PC-9 (cell line): ENCODE measurements at regions of chr7 and their contacts with region 1.

Region 1: GRCh38 chr7:125828153-125828700 is 898.6 kb upstream of the POT1 start:
- DNase-seq: no peak
- H3K4me3 ChIP-seq: no peak overlapping the region
- H3K27ac ChIP-seq: no peak overlapping the region
- H3K4me1 ChIP-seq: no peaks in the 10 kb centered on the region
- H3K27me3 ChIP-seq: no peaks in the 10 kb centered on the region
- CTCF ChIP-seq: no peak

Region 2: GRCh38 chr7:125246706-125247105 is 581.5 kb before region 1 on chr7:
- CTCF ChIA-PET with region 1: no interaction called
- POLR2A ChIA-PET with region 1: interaction called, 25 read pairs
- intact Hi-C with region 1: no loop called
- DNase-seq: no peak
- H3K4me3 ChIP-seq: no peak overlapping the region
- H3K27ac ChIP-seq: no peak overlapping the region
- H3K4me1 ChIP-seq: no peaks in the 10 kb centered on the region
- H3K27me3 ChIP-seq: no peaks in the 10 kb centered on the region
- CTCF ChIP-seq: no peak

Region 3: GRCh38 chr7:126079581-126079980 is 251.4 kb after region 1 on chr7:
- CTCF ChIA-PET with region 1: no interaction called
- POLR2A ChIA-PET with region 1: interaction called, 15 read pairs
- intact Hi-C with region 1: no loop called
- DNase-seq: no peak
- H3K4me3 ChIP-seq: no peak overlapping the region
- H3K27ac ChIP-seq: no peak overlapping the region
- H3K4me1 ChIP-seq: no peaks in the 10 kb centered on the region
- H3K27me3 ChIP-seq: no peaks in the 10 kb centered on the region
- CTCF ChIP-seq: no peak

Region 4: GRCh38 chr7:126411032-126411820 is 583.0 kb after region 1 on chr7:
- CTCF ChIA-PET with region 1: no interaction called
- POLR2A ChIA-PET with region 1: no interaction called
- intact Hi-C with region 1: no loop called
- DNase-seq: no peak
- H3K4me3 ChIP-seq: peak overlapping the region; percentile 53; the same call in 1 of the 2 replicates
- H3K27ac ChIP-seq: no peak overlapping the region
- H3K4me1 ChIP-seq: no peaks in the 10 kb centered on the region
- H3K27me3 ChIP-seq: no peaks in the 10 kb centered on the region
- CTCF ChIP-seq: no peak